ENCODE measurements at regions of chr20 and their contacts with region 1.

Region 1: GRCh38 chr20:49028684-49029083 is 17.4 kb upstream of the CSE1L start:
- DNase-seq: peak; percentile 55 to 58
- H3K4me3 ChIP-seq: no peak overlapping the region
- H3K4me3 Mint-ChIP-seq: no peak overlapping the region
- H3K27ac Mint-ChIP-seq: no peak overlapping the region
- H3K4me1 ChIP-seq: no peaks in the 10 kb centered on the region
- H3K4me1 Mint-ChIP-seq: no peaks in the 10 kb centered on the region
- H3K27me3 ChIP-seq: no peaks in the 10 kb centered on the region
- H3K27me3 Mint-ChIP-seq: no peaks in the 10 kb centered on the region
- CTCF ChIP-seq: peak; percentile 72 to 82

Region 2: DNA sequence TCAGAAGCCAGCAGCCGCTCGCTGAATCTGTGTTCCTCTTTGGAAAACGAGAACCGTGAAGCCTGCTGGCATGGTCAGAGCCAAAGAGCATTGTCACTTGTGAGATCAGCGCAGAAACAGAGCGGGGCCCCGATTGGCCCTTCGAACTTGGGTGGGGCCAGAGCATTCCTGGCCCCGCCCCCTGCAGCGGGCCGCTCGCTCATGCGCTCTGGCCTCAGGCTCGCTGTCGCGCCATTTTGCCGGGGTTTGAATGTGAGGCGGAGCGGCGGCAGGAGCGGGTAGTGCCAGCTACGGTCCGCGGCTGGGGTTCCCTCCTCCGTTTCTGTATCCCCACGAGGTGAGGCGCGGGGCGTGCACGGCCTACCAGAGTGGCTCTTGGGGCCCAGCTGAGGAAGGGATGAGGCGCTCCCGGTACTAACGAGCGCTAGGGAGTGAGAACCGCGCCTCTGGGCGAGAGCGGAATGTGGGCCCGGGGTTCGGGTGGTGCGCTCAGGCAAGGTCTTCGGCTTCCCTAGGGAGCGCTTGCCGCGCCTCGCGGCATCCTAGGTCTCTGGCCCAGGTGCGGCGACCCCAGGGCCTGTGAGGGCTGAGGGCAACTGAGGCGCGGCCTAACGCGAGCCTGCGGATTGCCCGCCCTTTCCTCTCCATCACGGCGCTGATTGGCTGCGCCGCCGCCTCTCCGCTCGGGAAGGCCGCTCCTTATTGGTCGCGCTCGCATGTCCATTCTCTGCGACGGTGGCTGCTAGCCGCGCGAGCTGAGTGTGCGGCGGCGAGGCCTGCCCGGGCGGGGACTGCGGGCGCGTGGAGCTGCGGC is 17.6 kb after region 1 on chr20 and contains the start of gene CSE1L:
- CTCF ChIA-PET with region 1: interaction called, 7 read pairs
- POLR2A ChIA-PET with region 1: interaction called, 4 read pairs
- intact Hi-C with region 1: loop called (anchors 2 kb)
- DNase-seq: peak; percentile 99 to 100
- H3K4me3 ChIP-seq: peak within 1 kb of the TSS; percentile 83
- H3K4me3 Mint-ChIP-seq: peak within 1 kb of the TSS; percentile 97
- H3K27ac Mint-ChIP-seq: peak within 1 kb of the TSS; percentile 100
- H3K4me1 ChIP-seq: peaks cover 4% of the 10 kb centered on the region; the same call in 1 of the 2 replicates
- H3K4me1 Mint-ChIP-seq: peaks cover 28% of the 10 kb centered on the region
- H3K27me3 ChIP-seq: no peaks in the 10 kb centered on the region
- H3K27me3 Mint-ChIP-seq: no peaks in the 10 kb centered on the region
- CTCF ChIP-seq: peak in 1 of 2 experiments; percentile 45
- total RNA-seq, gene CSE1L: 316 and 324 TPM in 2 replicates